Posterior vena cava (tissue), 2 donors: ENCODE measurements at regions of chr9 and their contacts with region 1.

Region 1: GRCh38 chr9:129610473-129611301 is 10.2 kb downstream of the C9orf50 start:
- DNase-seq: peak; percentile 93

Region 2: DNA sequence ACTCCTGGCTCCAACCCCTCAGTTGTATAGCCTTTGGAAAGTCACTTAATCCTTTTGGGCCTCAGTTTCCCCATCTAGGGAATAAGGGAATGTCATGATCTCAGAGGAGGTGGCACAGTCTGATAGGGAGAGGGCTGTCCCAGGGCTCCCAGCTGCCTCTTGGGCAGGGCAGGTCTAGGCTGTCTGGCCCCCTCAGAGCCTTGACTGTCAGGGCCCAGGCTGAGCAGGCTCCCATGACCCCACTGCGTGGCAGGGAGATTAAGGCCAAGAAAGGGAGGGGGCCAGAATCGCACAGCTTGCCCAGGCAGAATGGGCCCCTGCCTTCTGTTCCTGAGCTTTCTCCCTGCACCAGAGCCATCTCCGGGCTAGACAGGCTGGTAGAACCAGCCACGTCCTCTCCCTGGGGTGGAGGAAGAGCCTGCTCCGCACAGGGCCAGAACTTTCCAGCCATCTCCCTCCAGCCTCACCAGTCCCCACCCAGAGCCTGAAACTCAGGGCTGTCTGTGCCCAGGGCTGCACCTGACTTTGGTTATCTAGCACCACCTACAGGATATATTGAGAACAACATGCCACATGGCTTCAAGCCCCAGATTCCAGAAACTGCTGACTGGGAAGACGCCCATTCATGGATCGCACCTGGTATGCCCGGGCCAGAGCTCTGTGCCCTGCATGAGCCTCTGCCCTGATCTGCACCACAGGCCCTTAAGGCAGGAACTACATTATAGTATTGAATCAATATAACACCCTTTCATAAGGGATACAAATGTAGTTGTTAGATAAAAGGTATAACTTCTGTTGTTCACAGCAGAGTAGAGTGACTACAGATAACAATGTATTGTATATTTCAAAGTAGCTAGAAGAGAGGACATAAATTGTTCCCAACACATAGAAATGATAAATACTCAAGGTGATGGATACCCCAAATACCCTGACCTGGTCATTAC is 1575.6 kb before region 1 on chr9:
- intact Hi-C with region 1: no loop called
- DNase-seq: peak; percentile 87

Region 3: GRCh38 chr9:129131300-129132145 is 479.2 kb before region 1 on chr9:
- intact Hi-C with region 1: loop called in 1 of 2 experiments (anchors 2 kb)
- DNase-seq: peak; percentile 93

Region 4: GRCh38 chr9:129333953-129334724 is 276.5 kb before region 1 on chr9:
- intact Hi-C with region 1: loop called (anchors 10 kb)
- DNase-seq: peak; percentile 98

Region 5: GRCh38 chr9:129362287-129363000 is 248.2 kb before region 1 on chr9:
- intact Hi-C with region 1: no loop called
- DNase-seq: no peak

Region 6: GRCh38 chr9:129489838-129490582 is 120.7 kb before region 1 on chr9:
- intact Hi-C with region 1: loop called (anchors 5 kb)
- DNase-seq: no peak

Region 7: DNA sequence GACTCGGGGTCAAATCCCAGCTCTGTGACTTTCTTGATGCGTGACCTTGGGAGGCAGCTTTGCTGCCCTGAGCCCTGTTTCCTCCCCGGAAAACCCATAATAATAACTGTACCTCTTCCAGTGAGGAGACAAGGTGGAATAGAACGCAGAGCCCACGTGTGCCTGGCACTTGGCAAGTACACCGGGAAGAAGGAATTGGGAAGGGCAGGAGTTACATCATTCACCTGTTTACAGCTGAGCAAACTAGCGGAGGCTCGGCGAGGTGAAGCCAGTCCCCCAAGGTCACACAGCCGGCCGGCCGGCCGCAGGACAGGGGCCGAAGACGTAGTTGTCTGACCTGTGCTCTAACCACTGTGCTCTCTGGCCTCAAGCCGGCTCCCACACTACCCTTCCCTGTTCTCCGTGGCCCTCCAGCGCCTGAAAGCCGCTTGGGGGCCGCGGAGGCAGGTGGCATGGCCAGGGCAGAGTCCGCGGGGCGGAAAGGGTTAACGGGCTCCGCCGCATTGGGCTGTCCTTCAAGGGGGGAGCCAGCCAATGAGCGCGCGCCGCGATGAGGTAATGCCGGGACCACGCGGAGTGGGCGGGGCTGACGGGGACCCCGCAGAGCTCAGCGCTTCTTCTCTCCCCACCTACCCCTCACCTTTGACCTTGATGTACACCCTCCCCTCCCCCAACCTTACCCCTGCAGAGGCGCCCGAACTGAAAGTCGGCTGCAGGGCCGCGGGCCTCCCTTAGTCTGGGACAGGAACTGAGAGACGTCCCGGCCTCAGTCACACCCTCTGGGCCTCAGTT is 115.0 kb before region 1 on chr9:
- intact Hi-C with region 1: loop called (anchors 5 kb)
- DNase-seq: peak; percentile 98

Region 8: DNA sequence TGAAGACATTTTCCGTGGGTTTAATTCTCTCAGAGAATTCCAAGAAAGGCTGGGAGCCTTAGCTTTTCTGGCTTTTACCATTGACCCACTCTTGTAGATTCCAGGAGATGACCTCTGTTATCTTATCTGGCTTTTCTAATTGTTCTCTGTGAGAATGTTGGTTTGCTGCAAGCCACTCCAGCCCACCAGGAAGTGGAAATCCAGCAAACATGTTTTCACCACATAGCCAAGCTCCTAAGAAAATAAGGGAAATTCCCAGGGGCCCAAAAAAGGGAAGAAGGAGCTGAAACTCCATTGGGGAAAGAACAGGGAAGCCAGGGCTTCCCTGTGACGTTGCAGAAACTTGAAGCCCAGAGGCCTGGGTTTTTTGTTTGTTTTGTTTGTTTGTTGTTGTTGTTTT is 462.7 kb after region 1 on chr9:
- intact Hi-C with region 1: no loop called
- DNase-seq: no peak